H1 (cell line): ENCODE measurements at regions of chr3 and their contacts with region 1.

Region 1: DNA sequence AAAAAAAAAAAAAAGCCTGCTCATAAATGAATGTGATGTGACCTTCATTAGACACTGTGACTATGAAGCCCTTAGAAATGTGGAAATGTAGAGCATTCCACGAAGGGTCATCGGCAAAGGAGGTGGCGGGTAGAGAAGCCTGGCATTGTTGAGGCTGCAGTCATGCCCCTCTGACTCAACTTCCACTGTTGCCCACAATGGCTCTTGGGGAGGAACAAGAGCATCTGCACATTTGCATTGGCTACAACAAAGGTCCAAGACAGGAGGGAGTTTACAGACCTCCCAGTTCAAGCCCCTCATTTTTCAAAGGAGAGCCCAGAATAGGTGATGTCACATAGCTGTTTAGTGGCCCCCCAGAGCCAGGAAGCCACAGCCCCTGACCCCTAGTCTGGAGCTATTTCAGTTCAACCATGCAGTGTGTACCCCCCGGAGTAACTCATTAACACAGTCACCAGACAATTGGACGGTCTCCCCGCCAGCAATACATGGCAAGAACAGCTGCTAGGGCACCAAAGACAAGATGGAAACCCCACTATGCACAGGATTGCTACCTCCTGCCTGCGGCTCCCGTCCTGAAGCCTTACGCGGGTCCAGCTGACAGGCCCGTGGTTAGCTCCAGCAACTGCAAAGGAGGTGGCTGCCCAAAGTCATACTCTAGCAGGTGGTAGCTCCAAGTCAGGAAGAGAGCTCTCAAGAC is 56.2 kb downstream of the SH3BP5 start:
- DNase-seq: no peak
- H3K4me3 ChIP-seq: no peak overlapping the region
- H3K27ac ChIP-seq: no peak overlapping the region
- H3K4me1 ChIP-seq: peaks cover 0 to 12% (median 4%) of the 10 kb centered on the region in 4 experiments; a peak in 4 of 7 replicates
- H3K27me3 ChIP-seq: no peaks in the 10 kb centered on the region
- CTCF ChIP-seq: no peak
- EP300 ChIP-seq: no peak
- POLR2A ChIP-seq: no peak
- RAD21 ChIP-seq: no peak

Region 2: DNA sequence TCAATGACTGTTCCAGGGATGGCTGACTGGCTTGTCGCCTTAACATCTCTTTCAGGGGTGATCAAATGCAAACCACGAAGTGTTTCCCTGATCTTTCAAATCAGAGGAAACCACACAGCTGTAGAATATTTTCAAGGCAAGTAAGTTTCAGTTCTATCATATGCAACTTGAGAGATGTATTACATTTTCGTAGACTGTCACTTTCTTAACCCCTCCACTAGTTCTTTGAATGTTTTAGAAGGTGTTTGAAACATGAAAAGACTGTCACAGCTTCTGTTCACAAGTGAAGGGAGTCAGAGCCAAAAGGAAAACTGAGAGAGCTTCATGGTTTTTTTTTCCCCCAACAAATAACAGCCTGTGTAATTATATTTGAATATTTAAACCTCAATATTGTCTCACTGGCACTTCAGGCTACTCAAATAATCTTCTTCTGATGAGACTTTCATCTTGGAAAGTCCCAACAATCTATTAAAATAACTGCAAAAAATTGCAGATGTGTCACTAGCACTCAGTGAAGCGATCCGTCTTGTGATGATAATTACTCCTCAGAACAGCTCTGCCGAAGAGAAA is 96.0 kb before region 1 on chr3:
- CTCF ChIA-PET with region 1: no interaction called
- POLR2A ChIA-PET with region 1: no interaction called
- DNase-seq: no peak
- H3K4me3 ChIP-seq: no peak overlapping the region
- H3K27ac ChIP-seq: no peak overlapping the region
- H3K4me1 ChIP-seq: no peaks in the 10 kb centered on the region
- H3K27me3 ChIP-seq: no peaks in the 10 kb centered on the region; a peak in 2 of 7 replicates
- CTCF ChIP-seq: no peak
- EP300 ChIP-seq: no peak
- POLR2A ChIP-seq: no peak
- RAD21 ChIP-seq: no peak

Region 3: DNA sequence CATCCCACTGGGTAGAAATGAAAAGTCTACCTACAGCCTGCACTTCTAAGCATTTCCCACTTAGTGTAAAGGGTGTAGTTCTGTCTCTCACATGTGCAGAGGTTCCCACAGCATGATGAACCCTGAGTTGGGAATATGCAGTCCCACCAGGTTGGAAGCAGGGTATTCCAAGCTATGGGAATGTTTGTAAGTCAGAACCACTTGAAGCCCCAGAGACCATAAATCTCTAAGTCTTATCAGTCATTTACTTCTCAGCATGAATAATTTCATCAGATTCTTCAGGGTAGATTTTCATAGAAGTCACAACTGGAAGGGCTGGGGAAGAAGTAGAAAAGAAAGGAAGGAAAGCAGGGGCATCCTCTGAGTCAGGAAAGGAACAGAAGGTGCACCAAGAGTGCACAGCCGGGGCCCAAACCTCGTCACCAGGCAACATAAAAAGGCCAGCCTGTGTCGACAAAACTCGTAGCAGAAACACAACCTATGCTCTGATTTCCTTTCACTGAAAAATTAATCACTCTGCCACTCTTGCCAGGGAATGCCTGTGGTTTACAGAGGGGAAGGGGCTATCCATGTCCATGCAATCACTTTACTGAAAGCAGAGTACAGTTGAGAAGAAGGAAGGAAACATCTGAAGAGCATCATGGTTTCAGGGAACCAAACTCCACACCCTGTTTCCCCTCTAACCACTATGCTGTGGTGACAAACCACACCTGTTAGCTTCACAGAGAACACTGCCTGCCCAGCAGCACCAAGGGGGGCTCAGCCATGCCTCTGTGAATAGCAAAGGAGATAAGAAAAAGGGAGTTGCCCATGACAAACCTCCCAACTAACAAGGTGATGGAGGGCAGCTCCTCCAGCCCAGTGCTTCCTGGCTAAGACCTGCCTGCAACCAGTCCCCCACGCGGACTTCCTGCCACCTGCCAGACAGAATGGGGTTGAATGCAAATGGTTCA is 15.7 kb after region 1 on chr3:
- CTCF ChIA-PET with region 1: interaction called, 180 read pairs
- POLR2A ChIA-PET with region 1: no interaction called
- DNase-seq: no peak
- H3K4me3 ChIP-seq: no peak overlapping the region
- H3K27ac ChIP-seq: no peak overlapping the region
- H3K4me1 ChIP-seq: no peaks in the 10 kb centered on the region
- H3K27me3 ChIP-seq: no peaks in the 10 kb centered on the region
- CTCF ChIP-seq: no peak
- EP300 ChIP-seq: no peak
- POLR2A ChIP-seq: no peak
- RAD21 ChIP-seq: no peak

Region 4: GRCh38 chr3:15307580-15307979 is 31.4 kb after region 1 on chr3:
- CTCF ChIA-PET with region 1: interaction called, 11 read pairs
- POLR2A ChIA-PET with region 1: no interaction called
- DNase-seq: no peak
- H3K4me3 ChIP-seq: no peak overlapping the region
- H3K27ac ChIP-seq: no peak overlapping the region
- H3K4me1 ChIP-seq: peaks cover 0 to 8% (median 5%) of the 10 kb centered on the region in 4 experiments; a peak in 3 of 7 replicates
- H3K27me3 ChIP-seq: no peaks in the 10 kb centered on the region
- CTCF ChIP-seq: no peak
- EP300 ChIP-seq: no peak
- POLR2A ChIP-seq: no peak
- RAD21 ChIP-seq: no peak

Region 5: DNA sequence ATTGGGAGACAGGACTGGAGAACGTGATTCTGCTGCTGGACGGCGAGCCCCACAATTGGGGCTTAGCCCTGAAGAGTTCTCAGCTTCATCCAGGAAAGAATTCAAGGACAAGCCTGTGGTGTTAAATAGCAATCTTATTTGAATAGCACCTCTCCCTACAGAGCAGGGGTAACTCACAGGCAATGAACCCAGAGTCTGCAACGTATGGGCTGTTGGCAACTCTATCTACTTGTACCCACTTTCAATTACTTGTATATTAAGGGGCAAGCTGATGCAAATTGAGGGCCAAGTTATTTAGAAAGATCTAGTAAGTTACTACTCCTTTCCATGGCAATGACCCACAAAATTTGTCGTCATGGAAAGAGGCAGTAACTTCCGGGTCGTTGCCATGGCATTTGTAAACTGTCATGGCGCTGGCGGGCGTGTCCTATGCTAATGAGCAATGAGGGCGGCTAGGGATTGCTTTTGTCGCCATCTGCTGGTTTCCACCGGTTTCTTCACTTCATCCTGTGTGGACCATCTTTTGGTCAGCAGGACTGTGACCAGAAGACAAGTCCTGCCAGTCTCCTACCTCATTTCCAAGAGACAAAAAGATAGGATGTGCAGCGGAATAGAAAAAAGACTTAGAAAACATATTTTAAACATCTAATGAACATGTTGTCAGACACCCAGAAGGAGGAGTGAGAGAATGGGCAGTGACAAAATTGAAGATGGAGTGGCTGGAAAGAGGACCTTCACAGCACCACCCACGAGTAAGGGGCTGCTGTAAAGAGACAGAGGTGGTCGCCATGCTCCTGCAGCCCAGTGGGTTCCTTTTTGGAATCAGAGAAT is 102.0 kb after region 1 on chr3:
- CTCF ChIA-PET with region 1: interaction called, 11 read pairs
- POLR2A ChIA-PET with region 1: no interaction called
- DNase-seq: peak; percentile 66 to 91
- H3K4me3 ChIP-seq: peak overlapping the region in 1 of 4 experiments; percentile 32; a peak in 2 of 8 replicates
- H3K27ac ChIP-seq: peak overlapping the region; percentile 79
- H3K4me1 ChIP-seq: peaks cover 0 to 3% (median 0%) of the 10 kb centered on the region in 4 experiments; a peak in 3 of 7 replicates
- H3K27me3 ChIP-seq: no peaks in the 10 kb centered on the region
- CTCF ChIP-seq: peak; percentile 67 to 86 (median 81)
- EP300 ChIP-seq: peak in 1 of 2 experiments; percentile 59; a peak in 1 of 3 replicates
- POLR2A ChIP-seq: no peak
- RAD21 ChIP-seq: peak; percentile 81 to 85